ENCODE measurements at regions of chr6 and their contacts with region 1.

Region 1: DNA sequence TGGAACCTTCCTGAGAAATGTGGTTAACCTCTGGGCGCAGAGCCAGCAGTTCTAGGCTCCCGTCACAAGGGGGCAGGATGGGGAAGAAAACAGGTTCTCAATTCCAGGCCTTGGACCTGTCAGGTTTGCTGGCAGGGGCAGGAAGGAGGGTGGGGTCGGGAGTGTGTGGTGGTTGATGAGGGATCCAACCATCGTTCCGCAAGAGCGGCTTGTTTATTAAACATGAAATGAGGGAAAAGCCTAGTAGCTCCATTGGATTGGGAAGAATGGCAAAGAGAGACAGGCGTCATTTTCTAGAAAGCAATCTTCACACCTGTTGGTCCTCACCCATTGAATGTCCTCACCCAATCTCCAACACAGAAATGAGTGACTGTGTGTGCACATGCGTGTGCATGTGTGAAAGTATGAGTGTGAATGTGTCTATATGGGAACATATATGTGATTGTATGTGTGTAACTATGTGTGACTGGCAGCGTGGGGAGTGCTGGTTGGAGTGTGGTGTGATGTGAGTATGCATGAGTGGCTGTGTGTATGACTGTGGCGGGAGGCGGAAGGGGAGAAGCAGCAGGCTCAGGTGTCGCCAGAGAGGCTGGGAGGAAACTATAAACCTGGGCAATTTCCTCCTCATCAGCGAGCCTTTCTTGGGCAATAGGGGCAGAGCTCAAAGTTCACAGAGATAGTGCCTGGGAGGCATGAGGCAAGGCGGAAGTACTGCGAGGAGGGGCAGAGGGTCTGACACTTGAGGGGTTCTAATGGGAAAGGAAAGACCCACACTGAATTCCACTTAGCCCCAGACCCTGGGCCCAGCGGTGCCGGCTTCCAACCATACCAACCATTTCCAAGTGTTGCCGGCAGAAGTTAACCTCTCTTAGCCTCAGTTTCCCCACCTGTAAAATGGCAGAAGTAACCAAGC is 29.6 kb downstream of the SRSF3 start:
- DNase-seq: peak; percentile 88
- H3K4me3 Mint-ChIP-seq: no peak overlapping the region
- H3K27ac Mint-ChIP-seq: no peak overlapping the region
- H3K4me1 Mint-ChIP-seq: peaks cover 25% of the 10 kb centered on the region
- H3K27me3 Mint-ChIP-seq: no peaks in the 10 kb centered on the region
- CTCF ChIP-seq: peak; percentile 89

Region 2: GRCh38 chr6:35948725-35949124 is 675.1 kb before region 1 on chr6:
- CTCF ChIA-PET with region 1: no interaction called
- POLR2A ChIA-PET with region 1: no interaction called
- intact Hi-C with region 1: no loop called
- DNase-seq: peak; percentile 34
- H3K4me3 Mint-ChIP-seq: no peak overlapping the region
- H3K27ac Mint-ChIP-seq: no peak overlapping the region
- H3K4me1 Mint-ChIP-seq: peaks cover 29% of the 10 kb centered on the region
- H3K27me3 Mint-ChIP-seq: no peaks in the 10 kb centered on the region
- CTCF ChIP-seq: no peak

Region 3: DNA sequence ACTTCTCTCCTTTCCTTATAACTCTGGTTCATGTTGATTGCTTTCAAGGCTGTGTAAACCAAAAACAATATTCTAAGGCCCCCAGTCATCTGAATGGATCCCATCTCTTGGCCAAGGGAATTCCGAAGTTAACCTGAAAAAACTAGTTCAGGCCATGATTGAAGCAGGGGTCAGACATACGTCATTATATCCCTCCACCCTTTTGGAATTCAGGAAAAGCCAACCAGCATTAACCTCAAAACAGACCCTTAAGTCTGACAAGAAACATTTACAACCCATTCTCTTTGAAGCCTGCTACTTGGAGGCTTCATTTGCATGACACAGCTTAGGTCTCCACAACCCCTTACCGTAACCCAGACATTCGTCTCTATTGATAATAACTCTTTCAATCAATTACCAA is 639.1 kb before region 1 on chr6:
- CTCF ChIA-PET with region 1: no interaction called
- POLR2A ChIA-PET with region 1: no interaction called
- intact Hi-C with region 1: no loop called
- DNase-seq: no peak
- H3K4me3 Mint-ChIP-seq: no peak overlapping the region
- H3K27ac Mint-ChIP-seq: no peak overlapping the region
- H3K4me1 Mint-ChIP-seq: no peaks in the 10 kb centered on the region
- H3K27me3 Mint-ChIP-seq: peaks cover 26% of the 10 kb centered on the region
- CTCF ChIP-seq: no peak

Region 4: DNA sequence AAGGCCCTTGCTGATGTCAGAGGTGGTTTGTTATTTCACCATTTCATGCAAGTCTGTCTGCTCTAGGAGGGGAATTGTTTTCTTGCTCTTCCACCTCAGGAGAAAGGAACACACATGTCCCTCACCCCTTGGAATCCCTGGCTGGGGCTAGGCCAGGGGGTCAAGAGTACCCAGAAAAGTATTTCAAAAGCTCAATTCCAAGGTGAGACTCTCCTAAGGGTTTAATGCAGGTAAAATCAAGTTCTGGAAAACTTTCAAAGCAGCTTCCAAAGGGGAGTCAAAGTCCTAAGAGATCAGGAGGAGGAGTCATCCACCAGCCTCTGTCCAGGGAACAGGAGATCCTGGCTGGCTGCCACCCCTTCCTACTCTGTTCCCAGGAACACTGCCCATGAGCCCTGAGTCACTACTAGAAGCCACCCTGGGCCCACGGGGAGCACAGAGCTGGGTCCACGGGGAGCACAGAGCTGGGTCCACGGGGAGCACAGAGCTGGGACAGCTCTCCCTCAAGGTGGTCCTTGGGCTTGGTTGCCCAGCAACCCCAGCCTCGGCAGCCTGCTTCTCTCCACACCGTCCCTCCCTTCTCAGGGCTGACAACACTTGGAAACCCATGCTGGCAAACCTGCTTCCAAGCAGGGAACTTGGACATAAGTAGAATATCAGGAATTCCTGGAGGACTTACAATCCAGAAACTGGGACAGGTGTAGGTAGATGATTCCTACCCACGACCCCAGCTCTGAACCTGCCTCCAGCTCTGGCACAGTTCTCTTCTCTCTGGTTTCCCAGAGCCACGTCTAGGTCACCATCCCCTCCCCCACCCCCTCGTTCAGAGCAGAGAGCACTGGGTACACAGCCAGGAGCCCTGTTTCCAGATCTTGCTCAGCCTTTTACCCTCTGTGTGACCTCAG is 19.4 kb after region 1 on chr6:
- CTCF ChIA-PET with region 1: interaction called, 27 read pairs
- POLR2A ChIA-PET with region 1: interaction called, 22 read pairs
- intact Hi-C with region 1: no loop called
- DNase-seq: peak; percentile 95
- H3K4me3 Mint-ChIP-seq: no peak overlapping the region
- H3K27ac Mint-ChIP-seq: peak overlapping the region; percentile 31
- H3K4me1 Mint-ChIP-seq: peaks cover 14% of the 10 kb centered on the region
- H3K27me3 Mint-ChIP-seq: no peaks in the 10 kb centered on the region
- CTCF ChIP-seq: no peak

Region 5: DNA sequence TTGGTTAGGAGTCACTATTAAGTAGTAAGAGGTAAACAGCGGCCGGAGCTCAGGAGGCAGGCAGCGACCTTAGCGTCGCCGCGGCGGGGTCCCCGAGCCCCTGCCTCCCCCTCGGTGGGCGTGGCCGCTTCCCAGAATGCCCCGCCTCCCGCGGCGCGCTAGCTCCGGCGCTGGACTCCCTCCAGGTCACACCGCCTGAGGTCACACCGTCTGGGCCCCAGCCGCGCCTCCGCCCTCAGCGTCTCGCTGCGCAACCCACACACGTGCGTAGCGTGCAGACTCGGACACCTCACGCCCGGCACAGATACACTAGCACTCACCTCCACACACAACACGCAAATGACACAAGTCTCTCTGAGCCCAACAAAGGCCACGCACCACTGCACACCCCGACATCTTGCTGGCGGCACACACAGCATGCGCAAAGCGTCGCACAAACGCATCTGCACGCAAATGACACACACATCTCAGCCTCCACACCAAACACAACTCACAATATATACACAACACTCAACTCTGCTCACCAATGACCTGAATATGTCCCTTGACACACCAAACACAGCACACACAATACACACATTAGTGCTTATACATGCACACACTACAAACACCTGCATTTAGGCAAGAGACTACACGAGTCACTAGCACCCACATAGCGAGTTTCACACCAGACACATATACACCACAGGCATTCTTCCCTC is 37.1 kb after region 1 on chr6:
- CTCF ChIA-PET with region 1: interaction called, 4 read pairs
- POLR2A ChIA-PET with region 1: interaction called, 14 read pairs
- intact Hi-C with region 1: no loop called
- DNase-seq: no peak
- H3K4me3 Mint-ChIP-seq: no peak overlapping the region
- H3K27ac Mint-ChIP-seq: no peak overlapping the region
- H3K4me1 Mint-ChIP-seq: peaks cover 28% of the 10 kb centered on the region
- H3K27me3 Mint-ChIP-seq: no peaks in the 10 kb centered on the region
- CTCF ChIP-seq: no peak

Region 6: GRCh38 chr6:36666726-36667591 is 43.2 kb after region 1 on chr6:
- CTCF ChIA-PET with region 1: interaction called, 18 read pairs
- POLR2A ChIA-PET with region 1: interaction called, 14 read pairs
- intact Hi-C with region 1: no loop called
- DNase-seq: peak; percentile 98
- H3K4me3 Mint-ChIP-seq: no peak overlapping the region
- H3K27ac Mint-ChIP-seq: peak overlapping the region; percentile 91
- H3K4me1 Mint-ChIP-seq: peaks cover 31% of the 10 kb centered on the region
- H3K27me3 Mint-ChIP-seq: no peaks in the 10 kb centered on the region
- CTCF ChIP-seq: no peak

Region 7: DNA sequence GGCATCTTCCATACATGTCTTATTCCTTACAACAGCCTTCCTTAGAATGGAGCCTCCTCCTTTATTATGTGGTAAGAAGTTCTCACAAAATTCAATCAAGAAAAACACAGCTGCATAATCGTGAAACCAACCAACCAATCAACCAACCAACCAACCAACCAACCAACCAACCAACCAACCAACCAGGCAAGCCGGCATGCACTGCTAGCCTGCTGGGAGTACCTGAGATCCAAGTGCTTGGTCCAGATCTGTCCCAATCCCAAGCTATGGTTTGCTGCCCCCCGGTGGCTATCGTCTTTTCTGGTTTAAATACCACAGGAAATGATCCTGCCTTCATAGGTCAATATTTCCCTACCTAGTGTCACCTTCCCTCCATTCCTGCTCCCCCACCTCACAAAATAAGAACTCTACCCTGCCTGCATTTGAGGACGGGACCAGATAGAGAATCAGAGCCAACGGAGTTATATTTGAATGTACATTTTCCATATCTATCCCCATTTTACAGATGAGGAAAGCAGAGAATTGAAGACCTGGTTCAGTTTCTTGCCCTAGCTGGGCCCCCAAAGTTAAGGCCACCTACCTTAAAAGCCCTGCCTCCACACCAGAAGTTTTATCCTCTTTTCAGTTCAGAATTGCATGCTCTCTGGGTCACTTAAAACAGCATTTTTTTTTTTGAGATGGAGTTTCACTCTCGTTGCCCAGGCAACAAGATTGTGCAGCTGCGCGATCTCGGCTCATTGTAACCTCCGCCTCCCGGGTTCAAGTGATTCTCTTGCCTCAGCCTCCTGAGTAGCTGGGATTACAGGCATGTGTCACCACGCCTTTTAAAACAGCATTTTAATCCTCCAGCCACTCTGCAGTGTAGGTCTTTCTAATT is 100.9 kb after region 1 on chr6:
- CTCF ChIA-PET with region 1: interaction called, 21 read pairs
- POLR2A ChIA-PET with region 1: no interaction called
- intact Hi-C with region 1: loop called (anchors 1 kb)
- DNase-seq: peak; percentile 82
- H3K4me3 Mint-ChIP-seq: no peak overlapping the region
- H3K27ac Mint-ChIP-seq: no peak overlapping the region
- H3K4me1 Mint-ChIP-seq: peaks cover 18% of the 10 kb centered on the region
- H3K27me3 Mint-ChIP-seq: no peaks in the 10 kb centered on the region
- CTCF ChIP-seq: peak; percentile 71

Region 8: GRCh38 chr6:37141281-37142049 is 517.7 kb after region 1 on chr6:
- CTCF ChIA-PET with region 1: no interaction called
- POLR2A ChIA-PET with region 1: no interaction called
- intact Hi-C with region 1: no loop called
- DNase-seq: no peak
- H3K4me3 Mint-ChIP-seq: no peak overlapping the region
- H3K27ac Mint-ChIP-seq: no peak overlapping the region
- H3K4me1 Mint-ChIP-seq: peaks cover 15% of the 10 kb centered on the region
- H3K27me3 Mint-ChIP-seq: no peaks in the 10 kb centered on the region
- CTCF ChIP-seq: no peak